Cardiac septum (tissue), 1 donor: ENCODE measurements at regions of chr1 and their contacts with region 1.

Region 1: DNA sequence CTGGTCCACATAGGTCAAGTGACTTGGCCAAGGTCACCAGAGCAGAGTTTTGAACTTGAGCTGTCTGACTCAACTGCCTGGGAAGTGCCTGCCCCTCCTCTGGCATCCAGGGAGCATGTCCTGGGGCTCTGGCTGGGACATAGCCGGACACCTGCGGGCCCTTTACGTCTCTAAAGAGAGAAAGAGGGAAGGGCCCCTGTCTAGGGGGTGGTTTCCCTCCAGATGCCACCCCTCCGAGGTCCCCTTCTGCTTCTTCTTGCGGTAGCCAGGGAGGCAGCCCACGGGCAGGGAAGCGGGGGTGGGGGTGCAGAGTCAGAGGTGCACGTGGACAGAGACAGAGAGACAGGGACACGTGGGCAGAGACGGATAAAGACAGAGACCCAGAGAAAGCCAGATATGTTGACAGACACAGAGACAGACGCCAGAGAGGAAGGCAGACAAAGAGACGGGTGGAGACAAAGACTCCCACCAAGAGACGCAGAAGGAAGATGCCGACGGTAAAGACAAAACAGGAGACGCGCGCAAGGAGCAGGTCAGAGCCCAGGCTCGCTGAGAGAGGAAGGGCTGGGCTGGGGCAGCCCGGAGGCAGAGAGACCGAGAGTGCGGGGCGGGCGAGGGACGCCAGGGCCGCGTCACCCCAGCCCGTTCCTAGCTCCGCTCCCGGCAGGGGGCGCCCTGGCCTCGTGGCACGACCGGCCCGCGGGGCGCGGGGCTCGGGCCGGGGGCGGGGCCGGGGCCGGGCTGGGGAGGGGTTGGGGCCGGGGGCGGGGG is 458 bp upstream of the ALPL start:
- DNase-seq: peak; percentile 93

Region 2: GRCh38 chr1:21524686-21525339 is 16.0 kb after region 1 on chr1:
- intact Hi-C with region 1: no loop called
- DNase-seq: no peak

Region 3: GRCh38 chr1:21534674-21535378 is 26.1 kb after region 1 on chr1:
- intact Hi-C with region 1: loop called (anchors 2 kb)
- DNase-seq: no peak

Region 4: DNA sequence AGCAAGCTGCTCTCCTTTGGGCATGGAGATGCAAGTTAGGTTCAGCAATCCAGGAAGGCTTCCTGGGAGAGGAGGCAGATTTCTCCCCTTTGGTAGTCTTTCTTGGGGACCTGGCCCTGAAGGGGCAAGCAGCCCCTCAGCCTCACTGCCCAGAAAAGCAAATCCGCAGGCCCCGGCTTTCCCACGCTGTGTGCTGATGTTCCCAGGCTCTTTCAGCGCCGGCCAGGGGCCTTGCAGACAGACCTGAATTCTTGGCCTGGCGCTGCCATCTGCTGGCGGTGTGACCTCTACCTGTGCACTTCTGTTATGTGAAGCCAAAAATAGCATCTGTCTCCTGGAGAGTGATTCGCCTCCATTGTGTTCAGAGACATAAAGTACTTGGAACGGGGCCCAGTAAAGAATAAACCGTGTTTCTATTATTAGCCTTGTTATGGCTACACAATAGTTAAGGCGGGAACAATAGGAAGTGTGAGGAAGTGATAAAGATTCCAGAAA is 65.3 kb after region 1 on chr1:
- intact Hi-C with region 1: loop called (anchors 1 kb)
- DNase-seq: peak; percentile 93

Region 5: GRCh38 chr1:21586846-21587601 is 78.3 kb after region 1 on chr1:
- intact Hi-C with region 1: loop called (anchors 5 kb)
- DNase-seq: peak; percentile 87

Region 6: GRCh38 chr1:21659099-21659923 is 150.5 kb after region 1 on chr1:
- intact Hi-C with region 1: loop called (anchors 5 kb)
- DNase-seq: peak; percentile 90